Activated B cell treated with CpG ODN at 0.5 μM for 24 hours (primary cell): ENCODE measurements at regions of chr16 and their contacts with region 1.

Region 1: DNA sequence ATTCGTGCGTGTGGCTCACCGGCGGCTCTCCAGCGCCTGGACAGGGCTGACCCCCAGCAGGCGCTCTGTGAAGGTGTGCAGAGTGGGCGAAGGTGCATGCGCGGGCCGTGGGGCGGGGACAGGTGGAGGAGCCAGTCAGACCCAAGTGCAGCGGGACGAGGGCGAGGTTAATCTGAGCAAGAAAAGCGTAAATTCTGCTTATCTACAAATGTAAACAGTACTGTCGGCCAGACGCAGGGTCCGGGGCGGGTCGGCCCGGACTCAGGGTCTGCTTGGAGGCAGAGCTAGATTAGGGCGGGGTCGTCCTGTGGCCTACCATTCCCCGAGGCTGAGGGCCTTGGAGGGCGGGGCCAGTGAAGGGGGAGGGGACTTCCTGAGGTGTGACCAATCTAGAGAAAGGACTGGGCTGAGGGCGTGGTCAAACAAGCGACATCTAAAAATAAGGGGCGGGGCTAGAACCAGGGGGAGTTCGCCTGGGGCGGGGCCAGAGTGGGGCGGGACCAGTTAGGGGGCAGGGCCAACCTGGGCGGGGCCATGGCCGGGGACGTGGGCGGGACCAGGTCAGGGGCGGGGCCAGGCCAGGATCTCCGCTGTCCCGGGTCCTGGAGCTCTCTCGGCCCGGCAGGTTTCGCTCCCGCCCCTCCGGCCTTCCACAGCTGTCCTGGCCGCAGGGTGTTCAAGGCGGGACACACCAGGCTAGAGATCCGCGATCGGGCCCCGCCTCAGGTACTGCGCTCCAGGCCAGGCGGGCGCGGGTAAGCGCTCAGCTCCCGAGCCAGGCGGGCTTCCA is at the start of gene SEC14L5:
- DNase-seq: peak; percentile 63
- ATAC-seq: peak; percentile 95
- H3K4me3 Mint-ChIP-seq: peak within 1 kb of the TSS; percentile 75
- H3K27ac Mint-ChIP-seq: no peak within 1 kb of the TSS
- H3K4me1 Mint-ChIP-seq: peaks cover 13% of the 10 kb centered on the region
- H3K27me3 Mint-ChIP-seq: peaks cover 54% of the 10 kb centered on the region
- CTCF ChIP-seq: no peak
- total RNA-seq, gene SEC14L5: not detected in 2 replicates

Region 2: GRCh38 chr16:4358831-4359561 is 598.9 kb before region 1 on chr16:
- CTCF ChIA-PET with region 1: interaction called, 3 read pairs
- POLR2A ChIA-PET with region 1: no interaction called
- intact Hi-C with region 1: loop called (anchors 1 kb)
- DNase-seq: peak; percentile 68
- ATAC-seq: peak; percentile 83
- H3K4me3 Mint-ChIP-seq: no peak overlapping the region
- H3K27ac Mint-ChIP-seq: no peak overlapping the region
- H3K4me1 Mint-ChIP-seq: peaks cover 13% of the 10 kb centered on the region
- H3K27me3 Mint-ChIP-seq: no peaks in the 10 kb centered on the region
- CTCF ChIP-seq: peak; percentile 56

Region 3: GRCh38 chr16:4416200-4417032 is 541.5 kb before region 1 on chr16 and contains the start of gene CORO7:
- CTCF ChIA-PET with region 1: no interaction called
- POLR2A ChIA-PET with region 1: no interaction called
- intact Hi-C with region 1: loop called (anchors 5 kb)
- DNase-seq: peak; percentile 99
- ATAC-seq: peak; percentile 89
- H3K4me3 Mint-ChIP-seq: peak within 1 kb of the TSS; percentile 91
- H3K27ac Mint-ChIP-seq: peak within 1 kb of the TSS; percentile 95
- H3K4me1 Mint-ChIP-seq: peaks cover 36% of the 10 kb centered on the region
- H3K27me3 Mint-ChIP-seq: no peaks in the 10 kb centered on the region
- CTCF ChIP-seq: no peak
- total RNA-seq, gene CORO7: 74.6 and 86.6 TPM in 2 replicates

Region 4: GRCh38 chr16:4624015-4624826 is 333.7 kb before region 1 on chr16 and contains the start of gene MGRN1:
- CTCF ChIA-PET with region 1: no interaction called
- POLR2A ChIA-PET with region 1: no interaction called
- intact Hi-C with region 1: loop called (anchors 2 kb)
- DNase-seq: peak; percentile 86
- ATAC-seq: peak; percentile 90
- H3K4me3 Mint-ChIP-seq: peak within 1 kb of the TSS; percentile 99
- H3K27ac Mint-ChIP-seq: peak within 1 kb of the TSS; percentile 100
- H3K4me1 Mint-ChIP-seq: peaks cover 31% of the 10 kb centered on the region
- H3K27me3 Mint-ChIP-seq: no peaks in the 10 kb centered on the region
- CTCF ChIP-seq: peak; percentile 91
- total RNA-seq, gene MGRN1: 69.6 and 88.6 TPM in 2 replicates

Region 5: DNA sequence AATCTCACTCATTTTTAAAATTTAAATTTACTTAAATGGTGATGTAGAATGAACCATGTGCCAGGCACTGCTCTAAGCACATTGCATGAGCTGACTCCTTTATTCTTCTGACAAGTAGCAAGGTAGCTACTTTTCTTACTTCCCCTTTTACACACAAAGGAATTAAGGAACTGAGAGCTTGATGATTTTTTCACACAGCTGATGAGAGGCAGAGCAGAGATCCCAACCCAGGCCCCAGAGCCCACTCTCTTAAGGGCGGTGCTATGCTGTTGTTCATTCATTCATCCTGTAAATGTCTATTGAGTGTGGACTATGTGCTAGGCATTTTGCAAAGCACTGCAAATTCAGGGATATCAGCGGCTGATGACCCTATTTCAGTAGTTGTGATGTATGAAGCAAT is 18.2 kb after region 1 on chr16:
- CTCF ChIA-PET with region 1: interaction called, 3 read pairs
- POLR2A ChIA-PET with region 1: no interaction called
- intact Hi-C with region 1: loop called (anchors 2 kb)
- DNase-seq: no peak
- ATAC-seq: peak; percentile 98
- H3K4me3 Mint-ChIP-seq: no peak overlapping the region
- H3K27ac Mint-ChIP-seq: peak overlapping the region; percentile 3
- H3K4me1 Mint-ChIP-seq: peaks cover 9% of the 10 kb centered on the region
- H3K27me3 Mint-ChIP-seq: peaks cover 17% of the 10 kb centered on the region
- CTCF ChIP-seq: no peak

Region 6: GRCh38 chr16:5033256-5034169 is 75.6 kb after region 1 on chr16 and contains the start of gene NAGPA:
- CTCF ChIA-PET with region 1: no interaction called
- POLR2A ChIA-PET with region 1: no interaction called
- intact Hi-C with region 1: loop called (anchors 1 kb)
- DNase-seq: peak; percentile 82
- ATAC-seq: peak; percentile 87
- H3K4me3 Mint-ChIP-seq: peak within 1 kb of the TSS; percentile 87
- H3K27ac Mint-ChIP-seq: peak within 1 kb of the TSS; percentile 91
- H3K4me1 Mint-ChIP-seq: peaks cover 18% of the 10 kb centered on the region
- H3K27me3 Mint-ChIP-seq: no peaks in the 10 kb centered on the region
- CTCF ChIP-seq: no peak
- total RNA-seq, gene NAGPA: 23.8 and 24.2 TPM in 2 replicates